GM13977 (cell line): ENCODE measurements at regions of chr3 and their contacts with region 1.

Region 1: GRCh38 chr3:159252772-159253384 is 451.0 kb downstream of the MFSD1 start:
- DNase-seq: peak; percentile 9
- CTCF ChIP-seq: peak; percentile 67

Region 2: GRCh38 chr3:158395421-158395820 is 857.5 kb before region 1 on chr3:
- in situ Hi-C with region 1: no loop called
- DNase-seq: no peak
- CTCF ChIP-seq: no peak

Region 3: DNA sequence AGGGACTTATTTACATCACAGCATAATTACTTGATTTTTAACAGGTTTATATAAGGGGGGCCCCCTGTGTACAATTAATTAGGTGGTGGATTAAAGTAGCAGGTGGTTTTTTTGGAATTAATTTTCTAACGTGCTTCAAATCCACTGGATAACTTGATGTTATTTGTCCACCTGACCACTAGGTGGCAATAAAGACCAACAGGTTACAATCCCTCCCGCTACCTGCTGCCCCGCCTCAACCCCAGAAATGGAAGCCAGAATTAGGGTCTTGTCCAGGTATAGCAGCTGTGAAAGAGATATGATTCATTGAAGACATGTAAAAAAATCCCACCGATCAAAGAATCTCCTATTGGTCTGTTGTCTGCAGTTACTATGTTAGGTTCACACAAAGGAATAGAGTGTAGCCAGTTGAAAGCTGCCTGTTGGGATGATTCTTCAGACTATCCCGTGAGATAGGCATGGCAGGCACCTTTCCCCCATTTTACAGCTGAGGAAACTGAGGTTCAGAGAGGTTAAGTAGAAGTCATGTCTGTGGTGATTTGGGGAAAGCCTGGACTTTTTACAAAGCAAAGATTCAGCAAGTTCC is 407.0 kb before region 1 on chr3:
- in situ Hi-C with region 1: loop called (anchors 10 kb)
- DNase-seq: peak; percentile 60
- CTCF ChIP-seq: peak; percentile 75

Region 4: GRCh38 chr3:159128628-159129027 is 124.2 kb before region 1 on chr3:
- in situ Hi-C with region 1: loop called (anchors 10 kb)
- DNase-seq: no peak
- CTCF ChIP-seq: no peak